Motor neuron (in vitro differentiated cells): ENCODE measurements at regions of chr7 and their contacts with region 1.

Region 1: DNA sequence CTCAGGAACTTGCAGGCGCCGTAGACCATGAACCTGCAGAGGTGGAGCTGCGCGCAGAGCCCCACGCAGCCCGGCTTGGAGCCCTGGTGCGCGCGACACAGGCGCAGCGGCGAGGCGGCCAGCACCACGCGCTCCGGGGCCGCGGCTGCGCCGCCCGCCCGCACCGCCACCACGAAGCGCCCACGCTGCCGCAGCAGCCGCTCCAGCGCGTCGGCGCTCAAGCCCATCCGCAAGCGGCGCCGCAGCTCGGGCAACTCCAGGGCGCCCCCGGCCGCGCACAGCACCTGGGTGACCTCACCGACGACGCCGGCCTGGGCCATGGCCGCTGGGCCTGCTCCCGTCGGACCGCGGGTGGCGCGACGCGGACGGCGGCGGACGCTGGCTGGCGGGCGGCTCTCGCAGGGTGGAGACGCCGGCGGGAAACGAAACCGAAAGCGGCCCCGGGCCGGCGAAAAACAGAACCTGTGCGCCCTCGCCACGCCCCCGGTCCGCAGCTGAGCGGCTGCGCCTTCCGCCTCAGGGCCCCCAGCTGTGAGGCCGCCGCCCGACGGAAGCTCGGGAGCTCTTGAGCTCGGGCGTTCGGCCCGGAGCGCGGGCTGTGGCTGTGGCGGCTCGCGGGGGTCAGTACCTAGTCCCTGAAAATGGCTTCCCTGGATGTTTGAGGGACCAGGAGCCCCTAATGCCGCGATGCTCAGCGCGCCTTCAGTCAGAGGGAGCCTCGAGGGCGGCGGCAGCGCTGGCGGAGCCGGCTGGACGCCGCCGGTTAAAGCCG is at the start of gene PARP12:
- ATAC-seq: peak; percentile 76 to 91 (median 88)
- H3K4me3 ChIP-seq: peak within 1 kb of the TSS; percentile 33 to 51 (median 37)
- H3K27ac ChIP-seq: no peak within 1 kb of the TSS
- H3K4me1 ChIP-seq: no peaks in the 10 kb centered on the region
- total RNA-seq, gene PARP12: 0.43 to 46.9 (median 5.7) TPM

Region 2: GRCh38 chr7:140304191-140304799 is 241.6 kb after region 1 on chr7:
- in situ Hi-C with region 1: loop called in 1 of 9 experiments (anchors 25 kb)
- ATAC-seq: peak in 3 of 8 experiments; percentile 63 to 94 (median 90)
- H3K4me3 ChIP-seq: no peak overlapping the region
- H3K27ac ChIP-seq: no peak overlapping the region
- H3K4me1 ChIP-seq: peaks cover 0 to 6% of the 10 kb centered on the region in 2 donors